SK-N-SH (cell line): ENCODE measurements at regions of chr5 and their contacts with region 1.

Region 1: DNA sequence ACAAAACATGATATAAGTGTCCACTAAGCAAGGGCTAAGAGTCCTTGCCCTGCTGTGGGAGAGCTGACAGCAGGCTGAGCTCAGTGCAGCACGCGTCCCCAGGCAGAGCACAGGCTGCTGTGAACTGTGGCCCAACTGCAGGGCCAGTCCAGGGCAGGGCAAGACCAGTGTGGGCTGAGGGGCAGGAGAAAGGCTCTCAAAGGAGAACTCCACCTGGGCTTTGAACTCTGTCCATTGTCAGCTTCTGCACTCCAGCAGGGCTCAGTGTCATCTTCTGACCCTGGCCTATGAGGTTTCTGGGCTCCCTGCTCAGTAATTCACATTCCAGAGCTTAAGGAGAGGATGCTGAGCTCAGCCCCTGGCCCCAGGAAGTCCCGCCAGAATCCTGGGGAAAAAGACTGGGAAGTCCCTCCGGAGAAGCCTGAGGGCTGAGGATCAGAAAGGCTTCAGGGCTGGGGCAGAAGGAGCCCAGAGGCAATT is 37.4 kb downstream of the LHFPL2 start:
- DNase-seq: no peak
- H3K4me3 ChIP-seq: no peak overlapping the region
- H3K27ac ChIP-seq: peak overlapping the region; percentile 62 to 99
- H3K4me1 ChIP-seq: peaks cover 21 to 44% of the 10 kb centered on the region in 2 experiments
- H3K27me3 ChIP-seq: no peaks in the 10 kb centered on the region
- CTCF ChIP-seq: no peak
- EP300 ChIP-seq: no peak
- RAD21 ChIP-seq: no peak

Region 2: DNA sequence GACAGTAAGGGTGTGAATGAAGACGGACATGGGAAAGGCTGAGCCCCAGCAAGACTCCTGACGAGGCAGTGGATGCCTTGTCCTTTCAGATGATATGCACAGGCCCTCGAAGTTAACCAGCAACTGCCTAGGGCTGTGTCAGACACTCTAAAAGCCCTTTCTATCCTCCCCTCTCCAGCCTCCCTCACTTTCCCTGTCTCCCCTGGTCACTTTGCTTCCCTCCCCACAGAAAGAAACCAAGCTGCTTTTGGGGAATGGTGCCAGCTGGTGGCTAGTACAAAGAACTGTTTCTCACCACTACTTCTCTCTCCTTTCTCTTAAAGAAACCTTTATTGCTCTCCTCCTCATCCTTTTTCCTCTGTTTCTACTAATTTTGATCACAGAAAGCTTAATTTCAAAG is 16.0 kb after region 1 on chr5:
- CTCF ChIA-PET with region 1: interaction called, 13 read pairs
- POLR2A ChIA-PET with region 1: no interaction called
- DNase-seq: no peak
- H3K4me3 ChIP-seq: no peak overlapping the region
- H3K27ac ChIP-seq: peak overlapping the region; percentile 35 to 56; a peak in 3 of 4 replicates
- H3K4me1 ChIP-seq: peaks cover 23 to 42% of the 10 kb centered on the region in 2 experiments
- H3K27me3 ChIP-seq: no peaks in the 10 kb centered on the region
- CTCF ChIP-seq: peak; percentile 49
- EP300 ChIP-seq: no peak
- RAD21 ChIP-seq: peak; percentile 68

Region 3: DNA sequence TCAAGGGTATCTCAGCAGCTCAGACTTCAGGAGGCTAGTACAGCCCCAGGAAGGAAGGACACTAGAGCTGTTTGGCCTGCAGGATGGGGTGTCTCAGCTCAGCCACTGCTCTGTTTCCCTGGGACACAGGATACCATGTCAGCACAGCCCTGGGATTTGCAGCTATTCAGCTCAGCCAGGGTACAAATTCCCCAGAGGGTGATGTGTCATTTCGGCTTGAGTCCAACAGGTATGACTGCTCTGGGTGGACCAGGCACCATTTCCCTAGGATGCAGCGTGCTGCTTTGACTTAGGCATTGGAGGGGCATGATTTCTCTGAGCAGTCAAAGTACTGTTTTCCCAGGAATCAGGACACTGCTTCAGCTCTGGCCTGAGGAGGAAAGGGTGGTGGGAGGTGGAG is 243.9 kb after region 1 on chr5:
- CTCF ChIA-PET with region 1: no interaction called
- POLR2A ChIA-PET with region 1: no interaction called
- DNase-seq: no peak
- H3K4me3 ChIP-seq: no peak overlapping the region
- H3K27ac ChIP-seq: no peak overlapping the region
- H3K4me1 ChIP-seq: no peaks in the 10 kb centered on the region
- H3K27me3 ChIP-seq: no peaks in the 10 kb centered on the region
- CTCF ChIP-seq: no peak
- EP300 ChIP-seq: no peak
- RAD21 ChIP-seq: no peak